Gastrocnemius medialis (tissue), 4 donors: ENCODE measurements at regions of chr4 and their contacts with region 1.

Region 1: GRCh38 chr4:140153718-140154571 is at the start of gene MAML3:
- DNase-seq: peak; percentile 91 to 93
- ATAC-seq: peak; percentile 69 to 74
- H3K4me3 ChIP-seq: peak within 1 kb of the TSS; percentile 68 to 92 (median 88)
- H3K27ac ChIP-seq: peak within 1 kb of the TSS; percentile 93 to 97 (median 94)
- H3K4me1 ChIP-seq: peaks cover 0 to 11% of the 10 kb centered on the region in 2 donors
- H3K27me3 ChIP-seq: no peaks in the 10 kb centered on the region
- CTCF ChIP-seq: peak in 4 of 5 experiments; percentile 4 to 40 (median 21)
- POLR2A ChIP-seq: peak; percentile 55 to 84
- total RNA-seq, gene MAML3: 0.98 to 1.5 (median 1.4) TPM

Region 2: DNA sequence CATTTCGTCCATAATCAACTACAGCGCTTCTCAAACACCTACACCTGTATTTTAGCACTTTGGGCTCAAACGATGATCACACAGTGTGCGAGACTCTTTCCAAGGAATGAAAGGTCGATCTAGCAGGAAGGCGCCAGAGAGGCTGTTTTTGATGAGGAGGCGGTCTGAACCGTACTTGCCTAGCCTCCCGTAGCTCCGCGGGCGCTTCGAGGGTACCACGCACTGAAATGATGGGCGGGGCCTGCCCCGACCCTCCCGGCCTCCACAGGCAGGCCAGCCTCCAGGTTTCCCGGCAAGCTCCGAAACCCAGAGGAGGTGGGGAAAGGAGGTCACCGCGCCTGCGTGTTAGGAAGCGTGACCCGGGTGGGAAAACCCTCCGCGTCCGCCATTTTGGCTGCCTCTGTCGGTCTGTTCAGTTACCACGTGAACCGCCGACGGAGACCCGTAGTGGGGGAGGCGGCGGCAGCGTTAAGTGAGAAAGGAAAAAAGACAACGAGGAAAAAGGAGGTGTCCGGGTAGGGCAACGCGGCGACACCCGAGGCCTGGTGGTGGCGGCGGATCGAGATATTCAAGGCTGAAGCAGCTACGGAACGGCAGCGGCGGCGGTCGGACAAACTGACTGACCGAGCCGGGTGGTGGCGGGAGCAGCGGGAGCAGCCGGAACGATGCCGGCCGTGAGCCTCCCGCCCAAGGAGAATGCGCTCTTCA is 852.7 kb before region 1 on chr4 and contains the start of gene NAA15:
- in situ Hi-C with region 1: no loop called
- intact Hi-C with region 1: loop called (anchors 5 kb)
- DNase-seq: peak; percentile 96 to 98
- ATAC-seq: peak; percentile 79 to 80
- H3K4me3 ChIP-seq: peak within 1 kb of the TSS; percentile 71 to 95 (median 86)
- H3K27ac ChIP-seq: peak within 1 kb of the TSS; percentile 94 to 98 (median 96)
- H3K4me1 ChIP-seq: peaks cover 50 to 60% of the 10 kb centered on the region in 2 donors
- H3K27me3 ChIP-seq: no peaks in the 10 kb centered on the region
- CTCF ChIP-seq: no peak
- POLR2A ChIP-seq: peak; percentile 89 to 95
- total RNA-seq, gene NAA15: 25.0 to 48.8 (median 37.2) TPM

Region 3: DNA sequence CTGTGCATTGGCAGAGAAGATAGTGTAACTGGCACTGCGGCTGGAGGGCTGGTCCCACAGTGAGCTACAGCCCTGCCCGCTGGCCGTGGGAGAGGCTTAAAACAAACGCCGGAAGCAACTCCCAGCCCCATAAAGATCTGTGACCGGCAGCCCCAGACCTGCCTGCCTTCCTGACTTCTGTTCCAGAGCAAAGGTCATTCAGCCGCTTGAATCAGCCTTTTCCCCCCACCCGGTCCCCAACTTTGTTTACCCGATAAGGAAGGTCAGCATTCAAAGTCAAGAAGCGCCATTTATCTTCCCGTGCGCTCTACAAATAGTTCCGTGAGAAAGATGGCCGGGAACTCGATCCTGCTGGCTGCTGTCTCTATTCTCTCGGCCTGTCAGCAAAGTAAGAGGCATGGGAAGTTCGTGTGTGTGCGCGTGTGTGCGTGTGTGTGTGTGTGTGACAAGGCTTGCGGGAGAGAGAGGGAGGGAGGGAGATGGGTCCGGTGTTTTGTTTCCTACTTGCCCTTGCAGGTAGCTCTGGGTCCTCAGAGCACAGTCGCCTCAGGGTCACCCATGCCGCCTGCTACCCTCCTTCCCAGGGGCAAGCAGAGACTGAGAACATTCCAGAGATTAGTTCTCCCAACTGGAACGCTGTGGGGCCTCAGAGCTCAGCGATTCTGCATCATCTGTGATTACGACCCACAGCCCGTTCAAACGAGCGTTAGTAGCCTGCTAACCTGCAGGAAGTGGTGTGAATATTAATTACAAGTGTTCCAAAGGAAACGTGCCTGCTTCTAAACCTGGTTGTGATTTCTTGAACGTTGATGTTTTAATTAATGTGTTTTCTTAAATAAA is 488.0 kb before region 1 on chr4 and contains the start of gene MGST2:
- in situ Hi-C with region 1: no loop called
- intact Hi-C with region 1: loop called (anchors 2 kb)
- DNase-seq: peak; percentile 57 to 84
- ATAC-seq: peak; percentile 78 to 80
- H3K4me3 ChIP-seq: peak within 1 kb of the TSS; percentile 60 to 63 (median 63)
- H3K27ac ChIP-seq: peak within 1 kb of the TSS; percentile 84 to 91 (median 87)
- H3K4me1 ChIP-seq: peaks cover 22 to 39% of the 10 kb centered on the region in 2 donors
- H3K27me3 ChIP-seq: no peaks in the 10 kb centered on the region
- CTCF ChIP-seq: no peak
- POLR2A ChIP-seq: peak in 1 of 2 donors; percentile 39
- total RNA-seq, gene MGST2: 17.3 to 38.6 (median 30.9) TPM

Region 4: DNA sequence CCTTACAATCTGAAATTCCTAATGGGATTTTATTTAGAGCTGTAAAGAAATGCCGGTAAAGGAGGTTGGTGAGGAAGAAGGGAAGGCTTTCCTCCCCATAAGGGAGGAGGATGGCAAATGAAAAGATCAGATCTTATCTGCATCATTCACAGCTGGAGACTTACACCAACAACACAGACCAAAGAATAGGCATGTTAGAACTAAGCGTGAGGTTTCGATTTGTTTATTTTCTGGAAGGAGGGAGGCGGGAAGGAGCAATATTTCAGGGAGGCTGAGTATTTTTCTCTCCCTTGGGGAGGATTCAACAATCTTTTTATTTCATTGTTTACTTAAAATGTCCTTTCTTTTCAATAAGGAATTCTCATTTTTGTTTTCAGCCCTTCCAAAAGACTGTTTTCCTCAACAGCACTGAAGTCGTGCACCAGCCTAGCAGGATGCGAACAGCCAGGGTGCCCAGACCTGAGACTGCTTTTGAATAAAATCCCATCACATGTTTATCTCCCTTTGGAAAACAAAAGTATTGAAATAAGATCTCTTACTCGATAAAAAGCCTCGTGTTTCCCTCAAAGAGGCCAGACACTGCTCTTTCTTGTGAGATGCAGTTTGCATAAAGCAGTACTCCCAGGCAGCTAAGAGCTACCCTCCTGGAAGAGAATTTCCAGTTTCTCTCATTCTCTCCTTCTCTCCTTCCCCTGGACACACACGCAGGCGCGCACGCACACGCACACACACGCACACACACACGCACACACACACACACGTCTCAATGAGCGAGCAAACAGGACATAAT is 252.2 kb before region 1 on chr4:
- in situ Hi-C with region 1: no loop called
- intact Hi-C with region 1: loop called (anchors 5 kb)
- DNase-seq: no peak
- ATAC-seq: peak; percentile 43 to 48
- H3K4me3 ChIP-seq: peak overlapping the region; percentile 43 to 57 (median 50)
- H3K27ac ChIP-seq: peak overlapping the region in 3 of 4 donors; percentile 13 to 41 (median 35)
- H3K4me1 ChIP-seq: peaks cover 10 to 15% of the 10 kb centered on the region in 2 donors
- H3K27me3 ChIP-seq: no peaks in the 10 kb centered on the region
- CTCF ChIP-seq: no peak
- POLR2A ChIP-seq: no peak

Region 5: DNA sequence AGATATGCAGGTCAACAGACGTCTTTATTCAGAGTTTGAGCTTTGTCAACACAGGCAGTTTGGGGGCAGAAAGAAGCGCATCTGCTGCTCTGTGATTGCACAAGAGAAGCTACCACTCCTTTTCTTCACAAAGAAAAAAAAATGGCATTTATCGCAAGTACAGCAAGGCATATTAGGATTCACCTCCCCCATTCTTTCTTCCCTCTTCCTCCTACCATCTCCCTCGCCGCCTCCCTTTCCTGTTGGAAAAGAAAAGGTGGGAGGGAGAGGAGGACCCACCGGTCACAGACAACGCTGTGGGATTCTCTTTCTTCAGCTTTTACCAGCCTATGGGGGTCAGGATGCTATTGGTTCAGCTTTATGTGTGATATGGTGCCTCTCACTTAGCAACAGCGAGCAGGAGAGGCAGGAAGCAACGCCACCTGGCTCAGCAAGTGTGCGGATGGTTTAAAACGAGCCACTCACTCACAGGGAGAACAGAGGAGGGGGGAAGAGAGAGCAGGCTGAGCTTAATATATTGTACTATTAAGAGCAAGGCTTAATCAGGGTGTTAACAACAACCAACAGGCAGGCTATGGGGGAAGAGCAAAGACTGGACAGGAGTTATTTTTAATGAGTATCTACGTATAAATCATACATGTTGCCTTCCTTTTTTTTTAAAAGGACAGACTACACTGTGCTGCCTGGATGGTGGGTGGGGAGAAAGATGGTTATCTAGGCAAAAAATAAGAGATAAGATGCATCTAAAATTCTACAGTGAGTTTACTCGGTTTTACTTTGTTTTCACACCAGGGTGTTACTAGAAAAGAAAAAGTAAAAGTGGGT is 104.7 kb before region 1 on chr4:
- in situ Hi-C with region 1: no loop called
- intact Hi-C with region 1: loop called (anchors 2 kb)
- DNase-seq: peak in 1 of 2 donors; percentile 17
- ATAC-seq: peak; percentile 39 to 40
- H3K4me3 ChIP-seq: peak overlapping the region; percentile 35 to 46 (median 44)
- H3K27ac ChIP-seq: peak overlapping the region; percentile 21 to 71 (median 50)
- H3K4me1 ChIP-seq: peaks cover 24 to 26% of the 10 kb centered on the region in 2 donors
- H3K27me3 ChIP-seq: no peaks in the 10 kb centered on the region
- CTCF ChIP-seq: no peak
- POLR2A ChIP-seq: no peak

Region 6: DNA sequence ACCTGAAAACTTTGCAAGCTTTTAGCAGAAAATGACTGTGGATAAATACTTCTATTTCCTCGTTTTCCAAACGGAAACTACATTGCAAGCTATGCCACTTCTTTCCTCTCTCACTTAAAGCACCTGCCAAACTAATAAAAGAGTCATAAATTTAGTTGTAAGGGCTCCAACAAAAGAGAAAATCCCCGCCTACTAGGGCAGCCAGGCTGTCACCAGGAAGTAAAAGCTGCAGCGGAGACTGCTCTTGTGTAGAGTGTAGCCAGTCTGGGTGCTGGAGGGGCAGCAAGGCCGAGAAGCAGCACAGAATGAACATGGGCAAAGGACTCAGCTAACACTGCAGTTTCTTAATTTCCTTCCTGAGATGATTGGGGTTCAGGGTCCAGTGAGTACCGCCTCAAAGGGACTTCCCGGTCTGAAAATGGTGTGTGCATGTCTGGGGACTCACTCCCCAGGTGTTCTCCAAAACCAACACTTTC is 89.4 kb after region 1 on chr4:
- in situ Hi-C with region 1: loop called (anchors 5 to 10 kb)
- intact Hi-C with region 1: loop called (anchors 2 kb)
- DNase-seq: no peak
- ATAC-seq: no peak
- H3K4me3 ChIP-seq: no peak overlapping the region
- H3K27ac ChIP-seq: no peak overlapping the region
- H3K4me1 ChIP-seq: peaks cover 24 to 26% of the 10 kb centered on the region in 2 donors
- H3K27me3 ChIP-seq: no peaks in the 10 kb centered on the region
- CTCF ChIP-seq: no peak
- POLR2A ChIP-seq: no peak

Region 7: DNA sequence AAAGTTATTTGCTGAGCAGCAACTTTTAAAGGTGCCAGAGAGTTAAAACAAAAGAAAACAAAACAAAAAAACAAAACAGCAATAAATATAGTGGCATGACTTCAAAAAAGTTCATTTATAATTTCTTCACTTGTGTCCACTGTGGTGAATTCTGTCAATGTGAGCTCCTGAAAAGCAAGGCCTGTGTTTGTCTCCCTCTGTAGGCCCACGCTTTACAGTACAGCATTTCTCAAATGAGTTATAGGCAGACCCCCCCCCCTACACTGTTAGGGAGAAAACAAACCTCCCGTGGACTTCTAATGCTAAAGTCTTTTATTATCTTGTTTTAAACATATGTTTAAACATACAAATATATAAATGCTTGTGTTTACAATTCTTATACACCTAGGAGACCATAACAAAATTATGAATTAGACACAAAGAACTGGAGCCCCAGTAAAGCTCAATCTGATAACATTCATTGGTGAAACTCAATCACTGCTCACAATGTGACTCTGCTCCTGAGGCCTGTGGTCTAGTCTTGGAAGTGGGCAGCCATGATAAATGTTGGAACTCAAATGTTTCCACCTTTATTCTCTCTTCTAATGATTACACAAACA is 172.5 kb after region 1 on chr4:
- in situ Hi-C with region 1: no loop called
- intact Hi-C with region 1: loop called (anchors 5 kb)
- DNase-seq: no peak
- ATAC-seq: peak; percentile 63 to 68
- H3K4me3 ChIP-seq: no peak overlapping the region
- H3K27ac ChIP-seq: no peak overlapping the region
- H3K4me1 ChIP-seq: no peaks in the 10 kb centered on the region
- H3K27me3 ChIP-seq: no peaks in the 10 kb centered on the region
- CTCF ChIP-seq: peak in 4 of 5 experiments; percentile 41 to 61 (median 52)
- POLR2A ChIP-seq: no peak